ENCODE measurements at regions of chr14 and their contacts with region 1.

Region 1: DNA sequence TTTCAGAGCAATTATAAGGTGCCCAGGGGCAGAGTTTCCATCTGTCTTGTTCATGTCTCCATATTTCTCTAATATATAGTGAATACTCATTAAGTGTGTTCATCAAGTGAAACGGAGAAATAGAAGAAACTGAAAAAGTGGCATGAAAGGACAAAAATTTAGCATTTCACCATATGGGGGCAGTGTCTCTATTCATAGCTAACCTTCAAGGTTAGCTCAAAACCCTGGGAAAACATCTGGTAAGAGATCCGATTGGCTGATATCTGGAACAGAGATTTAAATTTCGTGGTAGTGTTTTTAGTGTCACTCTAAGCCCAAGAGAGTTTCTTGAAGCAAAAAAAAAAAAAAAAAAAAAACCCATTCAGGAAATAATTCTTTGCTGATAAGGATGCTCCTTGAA is 367.5 kb downstream of the DAD1 start:
- DNase-seq: peak; percentile 43
- H3K4me3 ChIP-seq: no peak overlapping the region
- H3K27ac ChIP-seq: no peak overlapping the region
- H3K4me1 ChIP-seq: no peaks in the 10 kb centered on the region
- CTCF ChIP-seq: peak; percentile 82

Region 2: GRCh38 chr14:22070119-22071011 is 151.1 kb before region 1 on chr14:
- CTCF ChIA-PET with region 1: no interaction called
- POLR2A ChIA-PET with region 1: interaction called, 11 read pairs
- intact Hi-C with region 1: no loop called
- DNase-seq: peak; percentile 18
- H3K4me3 ChIP-seq: peak overlapping the region; percentile 24
- H3K27ac ChIP-seq: no peak overlapping the region
- H3K4me1 ChIP-seq: peaks cover 18% of the 10 kb centered on the region
- CTCF ChIP-seq: no peak

Region 3: DNA sequence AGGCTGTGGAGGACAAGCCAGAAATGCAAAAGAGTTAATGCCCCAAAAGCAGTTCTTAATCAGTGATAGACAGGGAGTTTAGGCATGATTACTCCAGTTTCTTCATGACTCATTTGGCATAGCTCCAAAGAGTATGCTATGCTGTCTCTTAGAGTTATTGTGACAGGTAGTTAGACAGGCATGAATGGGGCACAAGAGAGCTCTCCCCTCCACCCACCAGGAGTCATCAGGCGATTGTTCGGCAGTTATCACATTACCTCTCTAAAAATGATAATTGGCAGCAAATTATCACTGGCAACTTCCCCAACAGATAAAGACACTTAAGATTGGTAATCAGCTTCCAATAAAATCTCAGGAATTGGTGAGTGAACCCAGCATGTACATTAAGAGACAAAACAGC is 47.4 kb after region 1 on chr14:
- CTCF ChIA-PET with region 1: no interaction called
- POLR2A ChIA-PET with region 1: no interaction called
- intact Hi-C with region 1: no loop called
- DNase-seq: no peak
- H3K4me3 ChIP-seq: no peak overlapping the region
- H3K27ac ChIP-seq: no peak overlapping the region
- H3K4me1 ChIP-seq: peaks cover 15% of the 10 kb centered on the region
- CTCF ChIP-seq: no peak